ENCODE measurements at regions of chr1 and their contacts with region 1.

Region 1: GRCh38 chr1:46603858-46604549 is at the start of gene MKNK1:
- DNase-seq: peak; percentile 100
- H3K4me3 Mint-ChIP-seq: peak within 1 kb of the TSS; percentile 92
- H3K27ac Mint-ChIP-seq: peak within 1 kb of the TSS; percentile 87
- H3K4me1 Mint-ChIP-seq: peaks cover 60% of the 10 kb centered on the region
- H3K27me3 Mint-ChIP-seq: no peaks in the 10 kb centered on the region
- total RNA-seq, gene MKNK1: 41.8 and 42.5 TPM in 2 replicates

Region 2: GRCh38 chr1:46616277-46617107 is 12.5 kb after region 1 on chr1 and contains the start of gene MOB3C:
- intact Hi-C with region 1: loop called (anchors 1 kb)
- DNase-seq: peak; percentile 91
- H3K4me3 Mint-ChIP-seq: peak within 1 kb of the TSS; percentile 94
- H3K27ac Mint-ChIP-seq: peak within 1 kb of the TSS; percentile 90
- H3K4me1 Mint-ChIP-seq: peaks cover 55% of the 10 kb centered on the region
- H3K27me3 Mint-ChIP-seq: no peaks in the 10 kb centered on the region
- total RNA-seq, gene MOB3C: 15.0 and 17.8 TPM in 2 replicates

Region 3: GRCh38 chr1:46820560-46821060 is 216.6 kb after region 1 on chr1:
- intact Hi-C with region 1: no loop called
- DNase-seq: no peak
- H3K4me3 Mint-ChIP-seq: no peak overlapping the region
- H3K27ac Mint-ChIP-seq: no peak overlapping the region
- H3K4me1 Mint-ChIP-seq: no peaks in the 10 kb centered on the region
- H3K27me3 Mint-ChIP-seq: peaks cover 1% of the 10 kb centered on the region

Measured in activated CD4-positive, alpha-beta T cell treated with anti-CD3 and anti-CD28 coated beads, Interleukin-2, amount 10 ng/mL, durations not matched to agents 24 days and 14 days (primary cell).